Calu3 (cell line): ENCODE measurements at regions of chr10 and their contacts with region 1.

Region 1: GRCh38 chr10:6445501-6446316 is 134.4 kb downstream of the PRKCQ start:
- DNase-seq: peak; percentile 35
- H3K4me3 Mint-ChIP-seq: no peak overlapping the region
- H3K27ac Mint-ChIP-seq: no peak overlapping the region
- H3K4me1 Mint-ChIP-seq: no peaks in the 10 kb centered on the region
- H3K27me3 Mint-ChIP-seq: peaks cover 59% of the 10 kb centered on the region
- CTCF ChIP-seq: peak; percentile 21

Region 2: GRCh38 chr10:6351495-6351894 is 94.2 kb before region 1 on chr10:
- CTCF ChIA-PET with region 1: no interaction called
- intact Hi-C with region 1: no loop called
- DNase-seq: no peak
- H3K4me3 Mint-ChIP-seq: no peak overlapping the region
- H3K27ac Mint-ChIP-seq: no peak overlapping the region
- H3K4me1 Mint-ChIP-seq: peaks cover 39% of the 10 kb centered on the region
- H3K27me3 Mint-ChIP-seq: no peaks in the 10 kb centered on the region
- CTCF ChIP-seq: no peak

Region 3: GRCh38 chr10:6558759-6559461 is 113.2 kb after region 1 on chr10:
- CTCF ChIA-PET with region 1: no interaction called
- intact Hi-C with region 1: loop called (anchors 10 kb)
- DNase-seq: no peak
- H3K4me3 Mint-ChIP-seq: no peak overlapping the region
- H3K27ac Mint-ChIP-seq: no peak overlapping the region
- H3K4me1 Mint-ChIP-seq: no peaks in the 10 kb centered on the region
- H3K27me3 Mint-ChIP-seq: peaks cover 84% of the 10 kb centered on the region
- CTCF ChIP-seq: no peak